ENCODE measurements at regions of chr1 and their contacts with region 1.

Region 1: DNA sequence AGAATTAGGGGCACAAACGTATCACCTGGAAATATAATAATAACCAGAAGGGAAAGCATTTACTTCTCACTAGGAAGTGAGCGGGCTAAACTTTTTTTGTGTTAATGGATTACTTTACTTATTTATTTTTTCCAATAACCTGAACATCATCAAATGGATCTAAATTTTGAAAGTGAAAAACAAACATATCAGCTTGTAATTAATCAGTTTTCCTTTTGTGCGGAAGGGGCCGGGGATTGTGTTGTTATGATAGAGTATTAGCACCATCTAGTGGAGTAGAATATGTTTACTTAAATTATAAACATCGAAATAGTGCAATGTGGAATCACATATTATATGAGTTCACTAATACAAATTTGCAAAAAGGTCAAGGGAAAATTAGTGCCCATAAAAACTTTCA is 9.0 kb downstream of the CFH start:
- DNase-seq: no peak
- H3K4me3 ChIP-seq: no peak overlapping the region
- H3K27ac ChIP-seq: no peak overlapping the region
- H3K4me1 ChIP-seq: no peaks in the 10 kb centered on the region
- H3K27me3 ChIP-seq: no peaks in the 10 kb centered on the region
- CTCF ChIP-seq: peak; percentile 81

Region 2: GRCh38 chr1:196148367-196148970 is 512.4 kb before region 1 on chr1:
- CTCF ChIA-PET with region 1: interaction called, 5 read pairs
- POLR2A ChIA-PET with region 1: no interaction called
- intact Hi-C with region 1: loop called (anchors 2 kb)
- DNase-seq: no peak
- H3K4me3 ChIP-seq: no peak overlapping the region
- H3K27ac ChIP-seq: no peak overlapping the region
- H3K4me1 ChIP-seq: no peaks in the 10 kb centered on the region
- H3K27me3 ChIP-seq: no peaks in the 10 kb centered on the region
- CTCF ChIP-seq: peak; percentile 76

Region 3: DNA sequence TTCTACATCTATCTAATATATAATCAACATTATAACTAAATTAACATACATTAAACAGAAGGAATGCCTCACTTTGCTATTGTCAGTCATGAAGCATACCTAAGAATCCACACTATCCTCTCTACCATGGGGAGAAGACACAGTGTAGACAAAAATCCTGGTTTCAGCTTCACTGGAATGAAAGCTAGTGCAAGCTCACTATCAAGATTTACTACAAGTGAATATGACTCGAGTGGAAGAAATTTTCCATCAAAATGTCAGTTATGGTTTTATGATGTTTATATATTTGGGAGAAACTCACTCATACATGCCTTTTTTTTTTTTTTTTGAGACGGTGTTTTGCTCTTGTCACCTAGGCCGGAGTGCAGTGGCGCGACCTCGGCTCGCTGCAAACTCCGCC is 476.9 kb before region 1 on chr1:
- CTCF ChIA-PET with region 1: no interaction called
- POLR2A ChIA-PET with region 1: no interaction called
- intact Hi-C with region 1: no loop called
- DNase-seq: no peak
- H3K4me3 ChIP-seq: no peak overlapping the region
- H3K27ac ChIP-seq: no peak overlapping the region
- H3K4me1 ChIP-seq: peaks cover 11% of the 10 kb centered on the region; the same call in 1 of the 2 replicates
- H3K27me3 ChIP-seq: no peaks in the 10 kb centered on the region
- CTCF ChIP-seq: no peak

Region 4: DNA sequence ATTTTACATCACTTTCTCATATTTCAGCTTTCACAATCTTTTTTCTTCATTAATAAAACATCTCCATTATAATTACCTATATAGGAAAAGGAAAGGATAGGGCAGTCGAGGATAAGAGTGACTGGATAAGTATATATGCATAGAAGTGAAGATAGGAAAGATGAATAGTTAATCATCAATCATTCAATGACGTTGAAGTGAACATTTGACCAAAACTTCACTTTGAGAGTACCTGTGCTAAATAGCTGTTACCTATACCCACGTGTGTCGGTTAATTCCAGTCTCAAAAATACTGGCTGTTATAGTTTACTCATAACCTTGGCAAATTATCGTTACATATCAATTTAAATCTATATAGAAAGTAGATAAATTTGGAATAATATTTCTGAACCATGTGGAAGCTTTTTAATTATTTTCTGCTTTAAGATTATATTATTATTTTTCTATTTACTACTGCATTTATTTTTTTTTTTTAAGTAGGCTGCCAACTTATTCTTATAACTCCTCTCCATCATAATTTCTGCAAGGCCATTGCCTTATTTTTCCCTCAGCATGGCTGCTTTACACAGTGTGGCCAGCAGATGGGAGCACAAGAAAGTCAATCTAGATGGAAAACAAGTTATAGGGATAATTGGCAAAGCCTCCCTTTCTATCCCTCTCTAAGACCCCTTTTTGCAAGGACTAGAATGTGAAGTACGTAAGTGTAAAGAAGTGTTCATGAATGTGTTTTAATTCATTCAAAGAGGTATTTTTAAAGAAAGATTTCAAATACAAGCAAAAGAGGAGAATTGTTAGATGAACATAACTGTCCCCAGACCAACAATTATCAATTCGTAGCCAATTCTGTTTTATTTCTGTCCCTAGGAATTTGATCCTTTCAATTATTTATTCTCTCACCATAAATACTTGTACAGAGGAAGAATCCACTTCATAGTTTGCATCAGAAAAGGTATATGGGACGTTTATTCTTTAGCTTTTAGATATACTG is 343.0 kb before region 1 on chr1:
- CTCF ChIA-PET with region 1: no interaction called
- POLR2A ChIA-PET with region 1: no interaction called
- intact Hi-C with region 1: loop called (anchors 1 kb)
- DNase-seq: peak in 1 of 2 experiments; percentile 9
- H3K4me3 ChIP-seq: no peak overlapping the region
- H3K27ac ChIP-seq: no peak overlapping the region
- H3K4me1 ChIP-seq: no peaks in the 10 kb centered on the region
- H3K27me3 ChIP-seq: no peaks in the 10 kb centered on the region
- CTCF ChIP-seq: peak; percentile 76

Region 5: GRCh38 chr1:196355206-196355786 is 305.6 kb before region 1 on chr1:
- CTCF ChIA-PET with region 1: interaction called, 13 read pairs
- POLR2A ChIA-PET with region 1: no interaction called
- intact Hi-C with region 1: loop called (anchors 5 kb)
- DNase-seq: no peak
- H3K4me3 ChIP-seq: no peak overlapping the region
- H3K27ac ChIP-seq: no peak overlapping the region
- H3K4me1 ChIP-seq: no peaks in the 10 kb centered on the region
- H3K27me3 ChIP-seq: no peaks in the 10 kb centered on the region
- CTCF ChIP-seq: peak; percentile 58

Region 6: GRCh38 chr1:196361104-196361714 is 299.6 kb before region 1 on chr1:
- CTCF ChIA-PET with region 1: no interaction called
- POLR2A ChIA-PET with region 1: no interaction called
- intact Hi-C with region 1: loop called (anchors 5 kb)
- DNase-seq: no peak
- H3K4me3 ChIP-seq: no peak overlapping the region
- H3K27ac ChIP-seq: no peak overlapping the region
- H3K4me1 ChIP-seq: 0 out of 2 replicates have a peak, but pooled peaks cover 4% of the 10 kb centered on the region
- H3K27me3 ChIP-seq: no peaks in the 10 kb centered on the region
- CTCF ChIP-seq: no peak

Region 7: DNA sequence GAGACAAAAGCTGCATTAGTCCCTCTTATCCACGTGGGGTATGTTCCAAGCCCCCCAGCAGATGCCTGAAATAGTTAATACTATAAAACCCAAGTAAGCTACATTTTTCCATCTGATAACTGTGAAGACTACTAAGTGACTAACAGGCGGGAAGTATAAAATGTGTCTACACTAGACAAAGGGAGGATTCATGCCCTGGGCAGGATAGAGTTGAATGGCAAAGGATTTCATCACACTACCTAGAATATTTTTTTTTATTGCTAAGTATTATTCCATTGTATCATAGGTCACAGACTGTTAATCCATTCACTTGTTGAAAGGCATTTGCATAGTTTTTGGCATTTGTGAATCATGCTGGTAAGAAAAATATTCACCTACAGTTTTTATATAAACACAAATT is 200.6 kb after region 1 on chr1:
- CTCF ChIA-PET with region 1: no interaction called
- POLR2A ChIA-PET with region 1: no interaction called
- intact Hi-C with region 1: no loop called
- DNase-seq: no peak
- H3K4me3 ChIP-seq: no peak overlapping the region
- H3K27ac ChIP-seq: no peak overlapping the region
- H3K4me1 ChIP-seq: no peaks in the 10 kb centered on the region
- H3K27me3 ChIP-seq: no peaks in the 10 kb centered on the region
- CTCF ChIP-seq: no peak

Measured in PC-9 (cell line).